ENCODE measurements at regions of chr19 and their contacts with region 1.

Region 1: GRCh38 chr19:1514986-1515721 is 2.3 kb upstream of the ADAMTSL5 start:
- DNase-seq: no peak
- ATAC-seq: no peak
- H3K4me3 Mint-ChIP-seq: no peak overlapping the region
- H3K27ac Mint-ChIP-seq: no peak overlapping the region
- H3K4me1 Mint-ChIP-seq: no peaks in the 10 kb centered on the region
- H3K27me3 Mint-ChIP-seq: peaks cover 36% of the 10 kb centered on the region
- CTCF ChIP-seq: no peak

Region 2: GRCh38 chr19:1540365-1540925 is 25.3 kb after region 1 on chr19:
- CTCF ChIA-PET with region 1: no interaction called
- POLR2A ChIA-PET with region 1: interaction called, 10 read pairs
- DNase-seq: no peak
- ATAC-seq: no peak
- H3K4me3 Mint-ChIP-seq: peak overlapping the region; percentile 51
- H3K27ac Mint-ChIP-seq: no peak overlapping the region
- H3K4me1 Mint-ChIP-seq: 0 out of 2 replicates have a peak, but pooled peaks cover 3% of the 10 kb centered on the region
- H3K27me3 Mint-ChIP-seq: peaks cover 22% of the 10 kb centered on the region
- CTCF ChIP-seq: no peak